ENCODE measurements at regions of chr10 and their contacts with region 1.

Region 1: GRCh38 chr10:22003079-22003913 is at the start of gene DNAJC1:
- ATAC-seq: peak; percentile 92 to 98 (median 98)
- H3K4me3 ChIP-seq: peak within 1 kb of the TSS; percentile 51 to 75 (median 58)
- H3K27ac ChIP-seq: peak within 1 kb of the TSS; percentile 89
- H3K4me1 ChIP-seq: peaks cover 11 to 12% of the 10 kb centered on the region in 2 donors
- total RNA-seq, gene DNAJC1: 13.6 to 46.2 (median 28.3) TPM

Region 2: DNA sequence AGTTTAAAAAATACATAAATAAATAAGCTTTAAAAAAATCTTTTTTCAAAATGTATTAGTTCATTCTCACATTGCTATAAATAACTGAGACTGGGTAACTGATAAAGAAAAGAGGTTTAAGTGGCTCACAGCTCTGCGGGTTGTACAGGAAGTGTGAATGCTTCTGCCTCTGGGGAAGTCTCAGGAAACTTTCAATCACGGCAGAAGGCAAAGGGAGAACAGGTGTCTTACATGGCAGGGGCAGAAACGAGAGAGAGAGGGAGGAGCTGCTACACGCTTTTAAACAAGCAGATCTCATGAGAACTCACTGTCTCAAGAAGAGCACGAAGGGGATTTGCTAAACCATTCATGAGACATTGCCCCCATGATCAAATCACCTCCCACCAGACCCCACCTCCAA is 114.3 kb before region 1 on chr10:
- in situ Hi-C with region 1: no loop called
- ATAC-seq: no peak
- H3K4me3 ChIP-seq: no peak overlapping the region
- H3K27ac ChIP-seq: no peak overlapping the region
- H3K4me1 ChIP-seq: no peaks in the 10 kb centered on the region

Region 3: DNA sequence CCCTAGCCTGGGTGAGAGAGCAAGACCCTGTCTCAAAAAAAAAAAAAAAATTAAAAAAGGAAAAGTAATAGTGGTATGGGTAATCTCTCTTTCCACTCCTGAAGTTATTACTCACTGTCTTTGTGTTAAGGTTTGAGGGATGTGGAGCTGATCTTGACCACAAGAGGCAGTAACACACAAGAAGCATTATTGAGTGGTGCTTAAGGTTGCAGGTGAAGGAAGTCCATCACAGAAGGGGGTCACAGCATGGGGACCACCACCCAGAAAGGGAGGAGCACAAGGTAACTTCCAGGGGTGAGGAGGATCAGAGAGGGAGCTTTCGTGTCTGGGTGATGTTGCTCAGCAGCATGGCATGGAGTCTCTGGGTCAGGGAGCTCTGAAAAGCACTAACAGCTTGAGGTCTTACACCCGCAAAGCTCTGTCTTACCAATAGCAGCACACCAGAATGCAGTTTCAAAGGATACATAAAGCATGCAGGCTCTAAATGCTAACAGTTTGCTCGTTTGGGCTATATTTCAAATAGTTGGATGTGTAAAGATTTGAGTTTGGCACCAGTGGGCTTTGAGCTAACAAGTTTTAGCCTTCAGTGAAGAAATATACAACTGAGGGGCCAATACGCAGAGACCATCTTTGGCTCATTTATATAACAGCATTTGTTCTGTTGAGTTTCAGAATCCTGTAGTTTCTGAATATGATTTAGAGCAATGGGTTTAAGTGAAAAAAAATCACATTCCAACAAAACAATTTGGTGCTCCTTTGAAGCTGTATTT is 100.6 kb after region 1 on chr10:
- in situ Hi-C with region 1: no loop called
- ATAC-seq: peak in 1 of 8 experiments; percentile 43
- H3K4me3 ChIP-seq: no peak overlapping the region
- H3K27ac ChIP-seq: no peak overlapping the region
- H3K4me1 ChIP-seq: no peaks in the 10 kb centered on the region

Region 4: GRCh38 chr10:22183771-22184461 is 180.6 kb after region 1 on chr10:
- in situ Hi-C with region 1: loop called in 1 of 9 experiments (anchors 25 kb)
- ATAC-seq: no peak
- H3K4me3 ChIP-seq: no peak overlapping the region
- H3K27ac ChIP-seq: no peak overlapping the region
- H3K4me1 ChIP-seq: no peaks in the 10 kb centered on the region